HepG2 (cell line): ENCODE measurements at regions of chr16 and their contacts with region 1.

Region 1: DNA sequence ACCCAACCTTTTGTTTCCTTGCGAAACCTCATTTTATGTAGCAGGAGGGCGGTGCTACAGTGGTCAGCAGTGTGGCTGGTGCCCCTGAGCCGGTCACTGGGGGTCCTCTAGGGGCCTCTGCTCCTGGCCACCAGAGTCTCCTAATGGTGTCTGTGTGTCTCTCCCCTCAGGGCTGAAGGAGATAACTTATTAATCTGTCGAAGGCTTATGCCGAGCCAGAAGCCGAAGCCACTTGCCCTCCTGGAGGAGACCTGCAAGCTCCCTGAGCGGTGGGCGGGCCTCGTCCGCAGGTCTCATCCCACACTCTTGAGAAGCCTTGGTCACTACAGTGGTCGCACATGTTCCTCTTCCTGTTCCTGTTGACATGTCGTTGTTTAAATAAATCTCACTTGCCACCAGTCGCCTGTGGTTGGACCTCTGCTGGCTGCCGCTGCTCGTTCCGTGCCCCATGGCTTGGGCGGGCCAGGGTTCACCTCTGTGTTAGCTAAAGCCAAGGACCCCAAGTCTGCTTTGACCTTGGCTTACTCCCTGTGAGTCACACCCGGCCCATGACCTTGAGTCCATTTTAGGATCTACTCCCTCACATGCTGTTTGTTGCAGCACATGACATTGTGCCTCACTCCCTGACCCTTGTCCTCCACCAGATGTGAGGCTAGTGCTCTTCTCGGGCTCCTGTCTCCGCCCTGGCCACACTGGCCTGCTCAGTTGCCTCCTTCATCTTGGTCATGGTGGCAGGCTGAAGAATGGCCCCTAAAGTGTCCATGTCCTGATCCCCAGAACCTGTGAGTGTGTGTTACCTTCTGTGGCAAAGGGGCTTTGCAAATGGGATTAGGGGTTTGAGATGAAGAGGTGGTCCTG is 38.7 kb upstream of the AQP8 start:
- DNase-seq: peak; percentile 99
- ATAC-seq: peak; percentile 94
- H3K4me3 ChIP-seq: peak overlapping the region; percentile 30 to 51 (median 40)
- H3K27ac ChIP-seq: peak overlapping the region; percentile 85
- H3K4me1 ChIP-seq: peaks cover 40% of the 10 kb centered on the region
- H3K27me3 ChIP-seq: no peaks in the 10 kb centered on the region
- CTCF ChIP-seq: peak; percentile 49
- EP300 ChIP-seq: peak in 1 of 2 experiments; percentile 90; a peak in 3 of 4 replicates
- POLR2A ChIP-seq: peak; percentile 49 to 77; a peak in 2 of 4 replicates
- RAD21 ChIP-seq: peak; percentile 10

Region 2: GRCh38 chr16:25060920-25061319 is 117.1 kb before region 1 on chr16:
- CTCF ChIA-PET with region 1: no interaction called
- POLR2A ChIA-PET with region 1: no interaction called
- in situ Hi-C with region 1: no loop called
- intact Hi-C with region 1: no loop called
- DNase-seq: no peak
- ATAC-seq: no peak
- H3K4me3 ChIP-seq: no peak overlapping the region
- H3K27ac ChIP-seq: no peak overlapping the region
- H3K4me1 ChIP-seq: peaks cover 28% of the 10 kb centered on the region
- H3K27me3 ChIP-seq: peaks cover 0 to 12% of the 10 kb centered on the region in 2 experiments; a peak in 2 of 5 replicates
- CTCF ChIP-seq: no peak
- EP300 ChIP-seq: no peak
- POLR2A ChIP-seq: no peak
- RAD21 ChIP-seq: no peak

Region 3: DNA sequence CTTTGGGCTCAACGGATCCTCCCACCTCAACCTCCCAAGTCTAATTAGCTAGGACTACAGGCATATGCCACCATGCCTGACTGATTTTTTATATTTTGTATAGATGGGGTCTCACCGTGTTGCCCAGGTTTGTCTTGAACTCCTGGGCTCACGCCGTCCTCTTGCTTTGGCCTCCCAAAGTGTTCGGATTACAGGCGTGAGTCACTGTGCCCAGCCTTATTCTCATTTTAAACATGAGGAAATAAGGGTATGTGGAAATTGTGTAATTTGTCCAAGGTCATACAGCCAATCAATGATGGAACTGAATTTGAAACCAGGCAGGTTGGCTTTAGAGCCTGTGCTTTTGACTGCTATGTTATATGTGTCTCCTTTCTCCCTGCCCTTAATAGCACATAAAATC is 11.2 kb after region 1 on chr16:
- CTCF ChIA-PET with region 1: no interaction called
- POLR2A ChIA-PET with region 1: interaction called, 11 read pairs
- in situ Hi-C with region 1: no loop called
- intact Hi-C with region 1: no loop called
- DNase-seq: peak; percentile 44
- ATAC-seq: peak; percentile 69
- H3K4me3 ChIP-seq: no peak overlapping the region
- H3K27ac ChIP-seq: no peak overlapping the region
- H3K4me1 ChIP-seq: peaks cover 20% of the 10 kb centered on the region
- H3K27me3 ChIP-seq: no peaks in the 10 kb centered on the region
- CTCF ChIP-seq: no peak
- EP300 ChIP-seq: no peak
- POLR2A ChIP-seq: no peak
- RAD21 ChIP-seq: no peak

Region 4: DNA sequence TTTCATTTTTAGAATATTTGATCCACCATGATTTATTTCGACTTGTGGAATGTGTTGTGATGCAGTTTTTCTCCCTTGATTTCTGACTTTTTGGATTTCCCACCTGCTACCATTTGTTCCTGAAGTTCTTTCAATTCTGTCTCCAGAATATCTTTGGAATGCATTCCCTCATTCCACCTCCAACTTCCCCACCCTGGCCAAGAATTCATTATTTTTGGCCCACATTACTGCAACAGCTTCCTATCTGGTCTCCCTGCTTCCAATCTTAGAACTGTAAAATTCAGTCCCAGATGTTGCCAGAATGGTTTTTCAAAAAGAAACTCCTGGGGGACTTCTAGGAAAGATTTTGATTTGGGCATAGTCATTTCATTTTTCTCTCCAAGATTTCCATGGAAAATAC is 331.4 kb after region 1 on chr16:
- CTCF ChIA-PET with region 1: no interaction called
- POLR2A ChIA-PET with region 1: no interaction called
- in situ Hi-C with region 1: no loop called
- intact Hi-C with region 1: no loop called
- DNase-seq: no peak
- ATAC-seq: no peak
- H3K4me3 ChIP-seq: no peak overlapping the region
- H3K27ac ChIP-seq: no peak overlapping the region
- H3K4me1 ChIP-seq: no peaks in the 10 kb centered on the region
- H3K27me3 ChIP-seq: no peaks in the 10 kb centered on the region
- CTCF ChIP-seq: no peak
- EP300 ChIP-seq: no peak
- POLR2A ChIP-seq: no peak
- RAD21 ChIP-seq: no peak